Cardiac septum (tissue), 1 donor: ENCODE measurements at regions of chr1 and their contacts with region 1.

Region 1: GRCh38 chr1:151832318-151832975 is 845 bp upstream of the RORC start:
- DNase-seq: peak; percentile 90

Region 2: DNA sequence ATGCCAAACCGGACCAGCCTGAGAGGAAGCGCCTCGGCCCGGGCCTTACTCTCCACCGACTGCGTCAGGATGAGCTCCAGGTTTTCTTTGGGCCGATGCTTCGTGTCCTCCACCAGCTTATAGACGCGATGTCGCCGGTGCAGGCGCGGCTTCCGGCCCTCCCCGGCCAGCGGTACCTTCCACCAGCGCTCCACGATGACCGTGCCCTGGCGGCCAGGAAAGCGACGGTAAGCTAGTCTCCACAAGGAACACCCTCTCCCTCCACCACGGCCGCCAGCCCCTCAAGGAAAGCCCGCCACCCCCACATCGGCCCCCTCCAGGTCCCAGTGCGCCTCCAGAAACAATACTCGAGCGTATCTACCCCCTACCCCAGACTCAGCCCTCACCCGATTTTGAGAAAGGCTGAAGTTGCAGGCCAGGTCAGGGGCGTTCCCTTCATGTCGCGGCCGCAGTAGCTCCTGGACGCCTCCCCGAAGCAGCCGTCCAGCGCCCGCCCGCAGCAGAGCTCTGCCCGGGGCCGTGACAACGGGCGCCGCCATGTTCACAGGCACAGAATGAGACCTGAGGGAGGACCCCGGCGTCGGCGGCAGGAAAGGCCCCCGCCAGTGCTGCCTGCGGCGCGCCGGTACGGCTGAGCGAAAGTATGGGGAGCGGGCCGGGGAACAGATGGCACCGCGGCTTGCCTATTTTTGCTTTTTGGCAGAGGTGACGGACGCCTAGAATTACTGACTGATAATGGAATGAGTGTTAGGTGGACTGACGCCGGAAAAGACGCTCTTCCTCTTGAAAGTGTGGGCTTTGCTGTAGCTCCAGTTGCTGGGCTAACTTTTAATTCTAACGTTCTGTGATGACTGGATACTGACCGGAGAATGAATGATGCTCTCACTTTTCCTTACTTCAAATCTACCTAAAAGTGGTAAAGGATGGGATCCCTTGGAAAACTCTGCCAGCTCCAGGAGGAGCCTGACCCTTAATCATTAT is 69.2 kb before region 1 on chr1 and contains the start of gene MRPL9:
- intact Hi-C with region 1: loop called (anchors 5 kb)
- DNase-seq: peak; percentile 92
- total RNA-seq, gene MRPL9: 43.2 TPM

Region 3: DNA sequence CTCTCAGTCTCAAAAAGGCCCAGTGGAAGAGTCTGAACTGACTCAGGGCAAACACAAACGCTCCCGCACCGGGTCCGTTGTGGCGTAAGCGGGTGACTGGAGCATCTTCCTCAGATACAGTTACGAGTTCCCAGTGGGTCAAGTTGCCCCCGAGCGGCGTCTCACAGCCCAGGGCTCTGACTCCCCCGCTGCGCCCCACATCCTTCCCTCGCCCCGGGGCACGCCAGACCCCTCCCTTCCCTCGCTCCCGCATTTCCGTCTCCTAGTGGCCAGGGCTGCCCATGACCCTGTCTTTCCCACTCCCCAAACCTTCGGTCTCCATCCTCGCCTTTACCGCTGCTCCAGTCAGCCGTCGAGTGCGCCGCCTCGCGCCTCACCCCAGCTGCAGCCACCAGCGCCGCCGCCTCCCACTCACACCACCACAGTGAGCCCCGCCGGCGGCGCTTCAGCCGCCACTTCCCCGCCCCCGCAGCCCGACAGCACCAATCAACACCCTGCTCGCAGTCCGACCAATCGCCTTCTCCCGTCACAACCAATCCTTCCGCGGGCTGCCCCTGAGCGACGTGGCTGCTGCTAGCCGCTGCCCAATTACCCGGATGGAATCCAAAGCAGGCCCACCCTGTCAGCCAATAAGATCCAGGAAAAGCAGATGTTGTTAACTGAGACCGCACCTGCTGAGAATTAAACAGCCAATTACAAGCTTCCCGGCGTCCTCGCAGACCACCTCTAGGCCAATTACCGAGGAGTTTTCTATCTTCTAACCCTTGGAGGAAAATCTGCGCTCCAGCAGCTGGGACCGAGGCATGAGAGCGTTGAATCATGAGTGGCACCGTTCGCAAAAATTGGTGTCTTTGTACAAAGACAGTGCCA is 42.1 kb before region 1 on chr1 and contains the start of gene TDRKH:
- intact Hi-C with region 1: loop called (anchors 2 kb)
- DNase-seq: peak; percentile 99
- total RNA-seq, gene TDRKH: 6.0 TPM